Heart right ventricle (tissue), 16 donors: ENCODE measurements at regions of chr7 and their contacts with region 1.

Region 1: GRCh38 chr7:43834463-43835251 is 34.7 kb downstream of the MRPS24 start:
- DNase-seq: no peak
- ATAC-seq: no peak
- H3K4me3 ChIP-seq: peak overlapping the region in 7 of 10 donors; percentile 10 to 42 (median 26)
- H3K27ac ChIP-seq: peak overlapping the region in 2 of 10 donors; percentile 19 to 60
- H3K4me1 ChIP-seq: peaks cover 0 to 22% (median 0%) of the 10 kb centered on the region in 9 donors
- H3K27me3 ChIP-seq: peaks cover 0 to 10% (median 0%) of the 10 kb centered on the region in 7 donors
- CTCF ChIP-seq: no peak

Region 2: DNA sequence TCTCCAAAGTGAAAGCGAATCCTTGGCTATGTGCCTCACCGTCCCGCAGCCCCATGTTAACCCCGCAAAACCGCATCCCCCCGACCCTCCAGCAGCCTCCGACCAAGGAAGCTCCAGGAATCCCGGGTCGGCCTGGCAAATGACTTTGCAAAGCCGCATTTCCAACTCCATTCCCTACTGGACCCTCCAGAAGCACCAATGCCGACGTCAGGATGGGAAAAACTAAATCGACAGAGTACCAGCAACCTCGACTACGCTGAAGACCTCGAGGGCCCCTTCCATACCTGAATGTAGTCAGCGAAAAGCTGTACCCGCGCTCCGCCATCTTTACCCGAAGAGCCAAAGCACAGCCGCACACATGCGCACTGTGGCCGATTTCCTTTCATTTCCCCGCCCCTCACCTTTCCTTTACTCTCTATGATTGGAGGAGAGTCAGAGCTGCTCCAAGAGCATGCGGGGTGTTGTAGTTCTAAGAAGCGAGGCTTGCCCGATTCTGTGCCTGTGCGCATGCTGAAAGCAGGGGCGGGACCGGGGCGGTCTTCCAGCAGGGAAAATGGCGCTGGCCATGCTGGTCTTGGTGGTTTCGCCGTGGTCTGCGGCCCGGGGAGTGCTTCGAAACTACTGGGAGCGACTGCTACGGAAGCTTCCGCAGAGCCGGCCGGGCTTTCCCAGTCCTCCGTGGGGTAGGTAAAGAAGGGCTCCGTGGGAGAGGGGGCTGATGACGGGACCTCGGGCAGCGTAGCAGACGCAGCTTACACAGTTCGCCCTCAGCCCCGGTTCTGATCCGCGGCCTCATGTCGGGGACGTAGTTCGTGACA is 902.6 kb before region 1 on chr7 and contains the starts of genes MRPL32 and PSMA2:
- intact Hi-C with region 1: loop called in 2 of 10 experiments (anchors 10 kb)
- DNase-seq: peak; percentile 91 to 96
- ATAC-seq: peak; percentile 100
- H3K4me3 ChIP-seq: peak within 1 kb of the TSS; percentile 68 to 97 (median 90)
- H3K27ac ChIP-seq: peak within 1 kb of the TSS; percentile 71 to 93 (median 82)
- H3K4me1 ChIP-seq: peaks cover 5 to 64% (median 45%) of the 10 kb centered on the region in 9 donors
- H3K27me3 ChIP-seq: no peaks in the 10 kb centered on the region
- CTCF ChIP-seq: no peak
- total RNA-seq, gene MRPL32: 45.7 to 78.0 (median 57.0) TPM
- total RNA-seq, gene PSMA2: 66.3 to 103 (median 77.1) TPM

Region 3: GRCh38 chr7:43577485-43577951 is 257.1 kb before region 1 on chr7:
- intact Hi-C with region 1: loop called in 8 of 10 experiments (anchors 2 to 10 kb)
- DNase-seq: no peak
- ATAC-seq: no peak
- H3K4me3 ChIP-seq: no peak overlapping the region
- H3K27ac ChIP-seq: no peak overlapping the region
- H3K4me1 ChIP-seq: peaks cover 0 to 10% (median 0%) of the 10 kb centered on the region in 9 donors
- H3K27me3 ChIP-seq: peaks cover 0 to 13% (median 0%) of the 10 kb centered on the region in 7 donors
- CTCF ChIP-seq: no peak

Region 4: DNA sequence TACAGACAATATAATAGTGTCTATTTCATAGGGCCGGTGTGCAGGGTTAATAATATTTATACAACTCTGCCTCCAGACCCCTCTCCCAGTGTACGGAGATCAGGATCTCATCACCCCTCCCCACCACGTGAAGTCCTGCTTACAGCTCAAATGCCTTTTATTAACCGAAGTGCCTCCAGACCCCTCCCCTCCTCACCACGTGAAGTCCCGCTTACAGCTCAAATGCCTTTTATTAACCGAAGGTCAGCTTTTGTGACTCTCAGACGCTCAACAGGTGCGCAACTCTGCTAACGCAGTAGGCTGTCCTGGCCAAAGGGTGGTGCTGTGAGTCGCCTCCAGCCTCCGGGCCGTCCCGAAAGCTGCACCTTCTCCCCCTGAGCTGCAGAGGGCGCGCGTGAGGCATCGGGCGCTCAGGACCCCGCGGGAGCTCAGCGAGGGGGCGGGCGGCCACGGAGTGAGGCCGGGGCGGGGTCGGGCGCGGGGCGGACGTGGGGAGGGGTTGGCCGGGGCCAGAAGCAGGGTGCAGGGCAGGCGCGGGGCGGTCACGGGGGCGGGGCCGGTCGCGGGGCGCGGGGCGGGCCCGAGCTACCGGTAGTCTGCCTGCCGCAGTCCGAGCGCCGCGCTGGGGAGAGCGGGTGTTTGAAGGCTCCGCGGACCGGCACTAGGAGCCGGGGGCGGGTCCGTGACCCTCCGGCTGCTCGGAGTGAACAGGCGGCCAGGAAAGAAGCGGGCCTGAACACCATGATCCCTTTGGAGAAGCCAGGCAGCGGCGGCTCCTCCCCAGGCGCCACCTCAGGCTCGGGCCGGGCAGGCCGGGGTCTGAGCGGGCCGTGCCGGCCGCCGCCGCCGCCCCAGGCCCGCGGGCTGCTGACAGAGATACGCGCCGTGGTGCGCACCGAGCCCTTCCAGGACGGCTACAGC is 251.9 kb before region 1 on chr7 and contains the start of gene STK17A:
- intact Hi-C with region 1: loop called in 9 of 10 experiments (anchors 1 to 10 kb)
- DNase-seq: peak; percentile 91 to 93
- ATAC-seq: peak; percentile 93 to 99 (median 96)
- H3K4me3 ChIP-seq: peak within 1 kb of the TSS; percentile 70 to 97 (median 86)
- H3K27ac ChIP-seq: peak within 1 kb of the TSS; percentile 65 to 98 (median 95)
- H3K4me1 ChIP-seq: peaks cover 0 to 31% (median 22%) of the 10 kb centered on the region in 9 donors
- H3K27me3 ChIP-seq: peaks cover 0 to 13% (median 0%) of the 10 kb centered on the region in 7 donors
- CTCF ChIP-seq: peak; percentile 91 to 99 (median 96)
- total RNA-seq, gene STK17A: 10.6 to 37.4 (median 23.3) TPM

Region 5: DNA sequence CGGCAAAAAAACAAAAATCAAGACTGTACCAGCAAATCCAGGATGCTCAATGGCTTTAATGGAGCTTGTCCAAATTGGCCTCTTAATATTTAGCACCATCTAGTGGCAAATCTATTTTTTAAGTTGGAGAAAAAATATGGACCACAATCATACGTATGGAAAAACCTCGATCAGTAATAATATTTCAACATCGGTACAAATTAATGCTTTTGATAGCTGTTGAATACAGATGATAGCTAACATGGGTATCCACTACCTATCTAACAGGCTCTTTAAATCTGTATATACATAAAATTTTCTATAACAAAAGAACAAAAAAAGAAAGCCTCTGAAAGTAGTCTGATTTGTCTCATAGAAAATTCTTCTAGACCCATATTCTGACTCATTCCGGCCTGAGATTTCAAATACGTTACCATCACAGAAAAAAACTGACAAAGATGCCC is 134.6 kb before region 1 on chr7:
- intact Hi-C with region 1: loop called in 1 of 10 experiments (anchors 10 kb)
- DNase-seq: no peak
- ATAC-seq: peak in 7 of 8 donors; percentile 49 to 83 (median 60)
- H3K4me3 ChIP-seq: no peak overlapping the region
- H3K27ac ChIP-seq: no peak overlapping the region
- H3K4me1 ChIP-seq: peaks cover 0 to 30% (median 7%) of the 10 kb centered on the region in 9 donors
- H3K27me3 ChIP-seq: no peaks in the 10 kb centered on the region
- CTCF ChIP-seq: peak; percentile 50 to 87 (median 76)

Region 6: GRCh38 chr7:43721193-43721806 is 113.4 kb before region 1 on chr7:
- intact Hi-C with region 1: loop called in 3 of 10 experiments (anchors 2 to 10 kb)
- DNase-seq: peak in 1 of 2 donors; percentile 16
- ATAC-seq: no peak
- H3K4me3 ChIP-seq: no peak overlapping the region
- H3K27ac ChIP-seq: no peak overlapping the region
- H3K4me1 ChIP-seq: peaks cover 0 to 26% (median 7%) of the 10 kb centered on the region in 9 donors
- H3K27me3 ChIP-seq: no peaks in the 10 kb centered on the region
- CTCF ChIP-seq: peak; percentile 48 to 82 (median 75)

Region 7: DNA sequence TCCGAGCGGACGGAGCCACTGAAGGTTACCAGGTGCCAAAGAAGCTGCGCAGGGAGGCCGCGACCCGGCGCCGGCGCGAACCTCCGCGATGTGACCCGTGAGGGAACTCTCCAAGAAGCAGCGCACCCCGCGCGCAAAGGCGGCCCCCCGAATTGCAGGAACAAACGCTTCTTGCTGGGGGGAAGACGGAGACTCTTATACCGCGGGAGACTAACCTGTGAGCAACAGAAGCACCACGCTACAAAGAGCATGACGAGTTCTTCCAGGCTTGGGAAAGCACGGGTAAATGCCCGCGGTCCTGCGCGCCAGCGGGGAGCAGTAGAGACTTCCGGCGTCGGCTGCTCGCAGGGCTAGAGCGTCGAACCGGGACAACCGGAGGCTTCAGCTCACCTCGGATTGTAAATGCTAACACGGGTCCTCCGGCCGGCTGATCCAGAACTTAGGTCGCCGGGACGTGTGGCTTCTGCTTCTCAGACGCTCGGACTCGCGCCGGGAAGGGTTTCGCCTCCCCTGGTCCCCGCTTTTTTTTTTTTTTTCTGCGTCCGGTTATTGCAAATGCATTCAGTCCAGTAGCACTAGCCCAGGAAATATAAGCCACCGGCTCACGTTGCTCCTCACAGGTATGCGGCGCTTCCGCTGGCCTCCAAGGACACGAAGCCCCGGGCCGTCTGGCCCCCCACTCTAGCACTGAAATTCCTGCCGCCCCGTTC is 105.3 kb before region 1 on chr7 and contains the start of gene COA1:
- intact Hi-C with region 1: loop called in 2 of 10 experiments (anchors 5 to 10 kb)
- DNase-seq: peak; percentile 86 to 89
- ATAC-seq: peak; percentile 98 to 99 (median 99)
- H3K4me3 ChIP-seq: peak within 1 kb of the TSS; percentile 76 to 94 (median 84)
- H3K27ac ChIP-seq: peak within 1 kb of the TSS; percentile 70 to 96 (median 92)
- H3K4me1 ChIP-seq: peaks cover 0 to 40% (median 30%) of the 10 kb centered on the region in 9 donors
- H3K27me3 ChIP-seq: no peaks in the 10 kb centered on the region
- CTCF ChIP-seq: peak in 3 of 9 donors; percentile 14 to 27 (median 20)
- total RNA-seq, gene COA1: 64.5 to 83.1 (median 75.4) TPM